Colonic mucosa (tissue), 4 donors: ENCODE measurements at regions of chr20 and their contacts with region 1.

Region 1: GRCh38 chr20:4607287-4607713 is 114.4 kb upstream of the PRND start:
- DNase-seq: peak; percentile 52
- H3K4me3 ChIP-seq: no peak overlapping the region
- H3K27ac ChIP-seq: no peak overlapping the region
- H3K4me1 ChIP-seq: no peaks in the 10 kb centered on the region
- H3K27me3 ChIP-seq: no peaks in the 10 kb centered on the region
- CTCF ChIP-seq: peak; percentile 92

Region 2: DNA sequence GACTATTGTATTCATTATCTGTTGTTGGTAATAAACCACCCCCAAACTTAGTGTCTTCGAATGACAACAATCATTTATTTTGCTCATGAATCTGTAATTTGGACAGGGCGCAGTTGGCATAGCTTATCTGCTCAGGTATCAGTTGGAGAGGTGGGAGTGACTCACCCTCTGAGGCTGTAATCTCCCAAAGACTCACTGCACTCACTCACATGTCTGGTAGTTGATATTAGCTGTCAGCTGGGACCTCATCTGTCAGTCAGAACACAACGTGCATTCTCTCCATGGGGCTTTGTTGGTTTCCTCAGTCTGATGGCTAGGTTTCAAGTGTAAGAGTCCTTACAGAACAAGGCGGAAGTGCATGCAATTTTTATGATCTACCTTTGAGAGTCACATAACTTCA is 104.5 kb before region 1 on chr20:
- intact Hi-C with region 1: no loop called
- DNase-seq: no peak
- H3K4me3 ChIP-seq: no peak overlapping the region
- H3K27ac ChIP-seq: no peak overlapping the region
- H3K4me1 ChIP-seq: no peaks in the 10 kb centered on the region
- H3K27me3 ChIP-seq: no peaks in the 10 kb centered on the region
- CTCF ChIP-seq: no peak

Region 3: GRCh38 chr20:4720041-4720976 is 113.0 kb after region 1 on chr20:
- intact Hi-C with region 1: loop called (anchors 1 kb)
- DNase-seq: peak; percentile 71
- H3K4me3 ChIP-seq: no peak overlapping the region
- H3K27ac ChIP-seq: peak overlapping the region; percentile 30
- H3K4me1 ChIP-seq: no peaks in the 10 kb centered on the region
- H3K27me3 ChIP-seq: no peaks in the 10 kb centered on the region
- CTCF ChIP-seq: peak; percentile 56

Region 4: DNA sequence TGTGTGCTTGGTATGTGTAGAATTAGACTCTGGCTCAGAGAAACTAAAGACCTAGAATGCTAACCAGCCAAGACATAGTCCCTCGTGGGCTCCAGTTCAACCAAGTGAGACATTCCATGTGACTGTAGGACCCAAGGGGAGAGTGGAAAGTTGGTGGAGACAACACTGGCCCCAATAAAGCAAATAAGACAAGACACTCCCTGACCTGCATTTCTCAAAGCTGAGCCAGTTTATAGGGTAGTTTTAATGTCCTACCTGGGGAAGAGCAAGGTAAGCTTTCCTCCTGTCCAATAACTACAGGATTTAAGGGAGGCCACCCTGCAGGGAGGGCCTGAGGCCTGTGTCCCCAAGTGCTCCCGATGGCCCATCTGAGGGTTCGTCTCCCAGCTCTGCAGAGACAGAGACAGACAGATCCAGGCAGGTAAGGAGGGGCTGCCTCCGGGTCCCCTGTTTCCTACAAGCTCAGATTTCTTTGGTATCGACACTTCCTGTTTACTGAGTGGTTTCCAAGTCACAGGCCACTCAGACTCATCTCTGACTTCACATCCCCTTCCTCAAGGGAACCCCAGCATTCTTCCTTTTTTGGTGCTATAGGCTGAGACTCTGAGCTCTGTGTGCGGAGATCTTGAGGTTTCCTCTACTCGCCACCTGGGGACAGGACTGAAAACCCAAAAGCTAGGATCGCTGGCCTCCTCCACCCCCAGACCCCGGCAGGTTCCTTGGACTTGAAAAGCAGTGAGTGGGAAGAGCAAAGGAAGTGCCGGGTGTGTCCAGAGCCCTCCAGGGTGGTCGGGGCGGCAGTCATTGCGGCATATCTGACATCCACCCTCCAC is 206.8 kb after region 1 on chr20:
- intact Hi-C with region 1: no loop called
- DNase-seq: no peak
- H3K4me3 ChIP-seq: peak overlapping the region; percentile 5
- H3K27ac ChIP-seq: peak overlapping the region; percentile 87
- H3K4me1 ChIP-seq: no peaks in the 10 kb centered on the region
- H3K27me3 ChIP-seq: no peaks in the 10 kb centered on the region
- CTCF ChIP-seq: no peak